Activated CD8-positive, alpha-beta memory T cell treated with anti-CD3 and anti-CD28 coated beads, Interleukin-2, amount 10 ng/mL, durations not matched to agents 7 days and 5 days (primary cell): ENCODE measurements at regions of chr12 and their contacts with region 1.

Region 1: DNA sequence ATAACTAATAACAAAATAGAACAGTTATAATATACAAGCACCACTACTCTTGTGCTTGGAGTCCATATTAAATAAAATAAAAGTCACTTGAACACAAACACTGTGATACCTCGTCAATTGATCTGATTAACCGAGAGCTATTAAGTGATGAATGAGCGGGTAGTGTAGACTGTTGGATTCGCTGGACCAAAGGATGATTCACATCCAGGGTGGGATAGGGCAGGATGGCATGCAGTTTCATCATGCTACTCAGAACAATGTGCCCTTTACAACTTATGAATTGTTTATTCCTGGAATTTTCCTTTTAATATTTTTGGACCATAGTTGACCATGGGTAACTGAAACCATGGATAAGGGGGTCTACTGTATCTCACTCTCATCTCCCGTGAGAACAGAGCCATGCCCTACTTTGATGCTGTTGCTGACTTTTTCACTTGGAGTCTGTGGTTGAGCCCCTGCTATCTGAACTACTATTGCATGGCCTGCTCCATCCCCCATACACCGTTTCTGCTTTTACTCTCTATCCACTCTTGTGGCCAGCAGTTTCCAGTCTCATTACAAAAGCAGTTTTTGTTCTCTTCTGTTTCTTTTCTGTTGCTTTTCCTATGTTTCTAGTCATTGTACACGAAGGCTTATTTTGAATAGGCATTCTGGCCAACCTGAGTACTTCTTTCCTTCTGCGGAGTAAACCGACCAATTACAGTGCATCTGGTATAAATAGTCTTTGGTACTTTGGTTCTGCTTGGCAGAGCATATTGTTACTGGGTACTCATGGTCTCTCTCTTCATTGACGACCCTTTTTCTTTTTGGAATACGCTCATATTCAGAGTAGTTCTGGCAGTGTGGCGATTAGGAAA is 12.2 kb downstream of the TMTC2 start:
- DNase-seq: no peak
- ATAC-seq: no peak
- H3K4me3 Mint-ChIP-seq: no peak overlapping the region
- H3K27ac Mint-ChIP-seq: no peak overlapping the region
- H3K4me1 Mint-ChIP-seq: no peaks in the 10 kb centered on the region
- H3K27me3 Mint-ChIP-seq: no peaks in the 10 kb centered on the region

Region 2: DNA sequence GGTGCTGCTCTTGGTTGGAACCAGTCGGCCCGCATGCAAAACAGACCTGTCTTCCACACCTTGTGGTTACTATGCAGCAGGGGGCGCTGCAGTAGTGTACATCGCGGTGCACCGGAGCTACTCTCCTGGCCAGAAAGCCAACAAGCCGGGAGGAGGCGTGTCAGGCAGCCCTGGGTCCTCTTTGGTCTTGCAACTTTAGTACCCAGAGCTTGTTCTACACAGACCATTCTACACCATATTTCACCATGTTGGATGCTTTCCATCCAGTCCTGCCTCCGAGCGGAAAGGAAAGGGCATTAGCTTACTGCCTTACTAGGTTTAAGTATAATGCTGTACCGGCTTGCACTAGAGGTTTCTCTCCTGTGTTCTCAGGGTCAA is 13.2 kb before region 1 on chr12:
- CTCF ChIA-PET with region 1: interaction called, 13 read pairs
- DNase-seq: peak; percentile 95
- ATAC-seq: peak; percentile 67
- H3K4me3 Mint-ChIP-seq: peak overlapping the region; percentile 90
- H3K27ac Mint-ChIP-seq: peak overlapping the region; percentile 86
- H3K4me1 Mint-ChIP-seq: peaks cover 23% of the 10 kb centered on the region
- H3K27me3 Mint-ChIP-seq: peaks cover 27% of the 10 kb centered on the region

Region 3: GRCh38 chr12:82880442-82880901 is 181.5 kb after region 1 on chr12:
- CTCF ChIA-PET with region 1: no interaction called
- DNase-seq: no peak
- ATAC-seq: no peak
- H3K4me3 Mint-ChIP-seq: no peak overlapping the region
- H3K27ac Mint-ChIP-seq: no peak overlapping the region
- H3K4me1 Mint-ChIP-seq: peaks cover 11% of the 10 kb centered on the region
- H3K27me3 Mint-ChIP-seq: no peaks in the 10 kb centered on the region